Esophagus muscularis mucosa (tissue), 4 donors: ENCODE measurements at regions of chr22 and their contacts with region 1.

Region 1: DNA sequence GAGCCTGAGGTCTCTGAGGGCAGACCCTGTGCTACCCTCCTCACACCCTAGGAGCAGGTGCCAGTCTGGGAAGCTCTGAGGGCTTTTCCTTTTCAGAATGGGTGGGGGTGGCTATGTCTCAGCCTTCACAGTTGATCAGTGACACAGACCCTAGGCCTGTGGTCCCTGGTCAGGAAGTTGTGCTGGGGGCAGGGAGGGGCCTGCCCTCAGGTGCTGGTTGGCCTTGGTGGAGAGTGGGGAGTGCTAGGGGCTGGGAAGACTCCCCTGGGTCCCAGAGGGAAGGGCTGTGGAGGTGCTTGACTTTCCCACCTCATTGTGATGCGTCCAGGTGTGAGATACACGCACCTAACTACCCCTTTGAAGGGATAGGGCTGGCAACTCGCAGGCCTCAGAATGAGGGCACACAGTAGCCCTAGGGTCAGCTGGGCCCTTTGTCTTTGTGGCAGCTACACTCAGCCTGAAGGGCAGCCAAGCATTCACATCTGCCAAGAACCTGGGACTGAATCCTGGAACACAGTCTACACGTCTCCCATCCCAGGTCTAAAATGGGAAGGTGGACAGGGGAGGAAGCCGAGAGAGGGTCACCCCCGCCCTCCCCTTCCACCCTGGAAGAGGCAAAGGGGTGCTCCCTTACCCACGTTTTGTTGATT is 31.2 kb upstream of the ATXN10 start:
- DNase-seq: no peak
- H3K4me3 ChIP-seq: no peak overlapping the region
- H3K27ac ChIP-seq: no peak overlapping the region
- H3K4me1 ChIP-seq: peaks cover 3 to 13% (median 3%) of the 10 kb centered on the region in 4 donors
- H3K27me3 ChIP-seq: peaks cover 0 to 53% (median 7%) of the 10 kb centered on the region in 4 donors
- CTCF ChIP-seq: no peak
- EP300 ChIP-seq: no peak
- POLR2A ChIP-seq: no peak

Region 2: DNA sequence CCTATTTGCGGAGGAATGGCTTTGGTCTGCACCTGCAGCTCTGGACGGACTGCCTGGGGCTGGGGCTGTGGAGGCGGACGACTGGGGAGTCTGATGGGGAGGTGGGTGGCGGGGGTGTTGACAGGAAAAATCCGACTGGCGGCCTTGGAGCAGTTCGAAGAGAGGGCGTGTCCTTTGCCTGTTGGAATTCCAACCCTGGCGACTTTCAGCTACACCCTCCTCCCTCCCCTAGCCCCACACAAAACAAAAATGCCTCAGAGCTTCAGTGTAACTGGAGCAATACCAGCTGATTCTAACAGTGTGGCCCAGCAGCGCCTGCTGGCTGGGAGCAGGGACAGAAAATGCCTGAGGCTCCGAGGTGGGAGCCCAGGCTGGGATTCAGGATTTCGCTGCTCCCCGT is 116.7 kb after region 1 on chr22:
- intact Hi-C with region 1: no loop called
- DNase-seq: no peak
- H3K4me3 ChIP-seq: peak overlapping the region in 2 of 4 donors; percentile 12 to 15
- H3K27ac ChIP-seq: peak overlapping the region in 1 of 4 donors; percentile 37
- H3K4me1 ChIP-seq: peaks cover 15 to 41% (median 34%) of the 10 kb centered on the region in 4 donors
- H3K27me3 ChIP-seq: no peaks in the 10 kb centered on the region
- CTCF ChIP-seq: peak in 1 of 3 experiments; percentile 36
- EP300 ChIP-seq: no peak
- POLR2A ChIP-seq: no peak

Region 3: DNA sequence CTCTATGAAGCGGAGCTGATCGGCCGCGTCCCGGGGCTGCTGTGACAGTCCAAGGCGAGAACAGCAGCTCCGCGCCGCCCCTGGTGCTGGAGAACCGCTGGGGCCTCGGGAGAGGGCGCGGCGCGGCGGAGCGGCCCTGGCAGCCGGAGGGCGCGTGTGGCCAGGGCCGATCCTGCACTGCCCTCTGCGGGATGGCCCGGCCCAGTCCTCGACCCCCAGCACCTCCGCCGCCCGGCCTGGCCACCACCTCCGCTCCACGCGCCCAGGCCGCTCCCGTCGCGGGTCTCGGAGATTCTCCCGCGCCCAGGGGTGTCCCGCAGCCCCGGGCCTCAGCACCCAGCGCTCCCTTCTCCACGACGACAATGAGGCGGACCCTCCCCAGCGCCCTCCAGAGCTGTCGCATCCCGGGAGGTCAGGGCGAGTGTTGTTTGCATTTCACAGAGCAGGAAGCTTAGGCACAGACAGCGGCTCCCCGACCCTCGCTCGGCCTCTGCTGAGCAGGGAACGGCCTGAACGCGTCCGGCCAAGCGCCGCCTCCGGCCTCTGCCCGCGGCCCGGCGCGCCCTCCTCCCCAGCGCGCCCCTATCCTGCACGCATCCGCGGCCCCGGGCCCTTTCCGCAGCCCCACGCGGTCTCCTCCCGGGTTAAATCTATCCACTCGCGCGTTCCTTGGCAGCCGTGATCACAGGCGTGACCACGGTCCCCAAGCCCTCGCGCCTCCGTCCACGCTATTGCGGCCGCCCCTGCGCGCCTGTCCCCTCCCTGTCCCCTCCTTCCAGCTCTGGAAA is 226.9 kb after region 1 on chr22:
- intact Hi-C with region 1: loop called (anchors 5 kb)
- DNase-seq: peak; percentile 39
- H3K4me3 ChIP-seq: peak overlapping the region; percentile 13 to 44 (median 34)
- H3K27ac ChIP-seq: no peak overlapping the region
- H3K4me1 ChIP-seq: peaks cover 15 to 41% (median 32%) of the 10 kb centered on the region in 4 donors
- H3K27me3 ChIP-seq: peaks cover 0 to 60% (median 20%) of the 10 kb centered on the region in 4 donors
- CTCF ChIP-seq: peak; percentile 27 to 35 (median 30)
- EP300 ChIP-seq: no peak
- POLR2A ChIP-seq: no peak